PC-9 (cell line): ENCODE measurements at regions of chr11 and their contacts with region 1.

Region 1: DNA sequence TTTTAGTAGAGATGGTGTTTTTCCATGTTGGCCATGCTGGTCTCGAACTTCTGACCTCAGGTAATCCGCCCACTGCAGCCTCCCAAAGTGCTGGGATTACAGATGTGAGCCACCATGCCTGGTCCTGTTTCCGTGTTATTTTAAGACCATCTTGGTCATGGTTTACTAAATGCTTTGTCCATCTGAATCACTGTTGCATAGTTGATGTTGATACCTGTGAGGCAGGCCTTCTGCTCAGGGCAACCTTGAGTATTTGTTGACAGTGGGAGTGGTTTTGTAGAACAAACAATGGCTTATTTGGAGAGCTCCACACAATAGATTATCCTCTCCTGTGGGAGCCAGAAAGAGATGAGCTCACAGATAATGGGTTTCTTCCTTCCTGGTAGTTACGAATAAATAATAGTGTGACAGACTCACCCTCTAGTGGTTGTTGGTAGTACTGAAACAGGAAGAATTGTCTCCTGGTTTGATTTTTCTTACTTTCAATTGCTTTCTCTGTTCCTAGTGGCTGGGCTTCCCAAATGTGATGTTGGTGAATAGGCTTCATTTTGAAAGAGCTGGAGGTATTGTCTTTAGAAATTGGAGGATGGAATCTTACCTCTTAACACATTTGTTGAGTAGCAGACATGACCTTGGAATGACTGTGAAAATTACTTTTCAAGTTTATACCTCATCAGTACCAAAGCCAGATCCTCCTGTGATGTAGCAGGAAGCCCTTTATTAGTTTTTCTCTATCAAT is 39.0 kb downstream of the CTNND1 start:
- DNase-seq: peak; percentile 71 to 100
- H3K4me3 ChIP-seq: peak overlapping the region; percentile 3; the same call in 1 of the 2 replicates
- H3K27ac ChIP-seq: peak overlapping the region; percentile 94
- H3K4me1 ChIP-seq: peaks cover 35% of the 10 kb centered on the region
- H3K27me3 ChIP-seq: no peaks in the 10 kb centered on the region
- CTCF ChIP-seq: peak; percentile 98

Region 2: GRCh38 chr11:57530596-57531507 is 269.8 kb before region 1 on chr11 and contains the start of gene TIMM10:
- CTCF ChIA-PET with region 1: no interaction called
- POLR2A ChIA-PET with region 1: no interaction called
- intact Hi-C with region 1: loop called (anchors 10 kb)
- DNase-seq: peak; percentile 98 to 99
- H3K4me3 ChIP-seq: peak within 1 kb of the TSS; percentile 83
- H3K27ac ChIP-seq: peak within 1 kb of the TSS; percentile 48
- H3K4me1 ChIP-seq: peaks cover 27% of the 10 kb centered on the region
- H3K27me3 ChIP-seq: peaks cover 4% of the 10 kb centered on the region; the same call in 1 of the 2 replicates
- CTCF ChIP-seq: peak; percentile 23; the same call in 1 of the 2 replicates
- total RNA-seq, gene TIMM10: 90.2 and 94.7 TPM in 2 replicates

Region 3: GRCh38 chr11:57735619-57736298 is 64.9 kb before region 1 on chr11:
- CTCF ChIA-PET with region 1: interaction called, 6 read pairs
- POLR2A ChIA-PET with region 1: interaction called, 3 read pairs
- intact Hi-C with region 1: loop called (anchors 1 kb)
- DNase-seq: peak; percentile 51 to 68
- H3K4me3 ChIP-seq: no peak overlapping the region
- H3K27ac ChIP-seq: peak overlapping the region; percentile 55
- H3K4me1 ChIP-seq: peaks cover 35% of the 10 kb centered on the region
- H3K27me3 ChIP-seq: no peaks in the 10 kb centered on the region
- CTCF ChIP-seq: no peak

Region 4: GRCh38 chr11:57751676-57752253 is 48.8 kb before region 1 on chr11 and contains the start of gene BTBD18:
- CTCF ChIA-PET with region 1: interaction called, 17 read pairs
- POLR2A ChIA-PET with region 1: interaction called, 4 read pairs
- intact Hi-C with region 1: no loop called
- DNase-seq: peak; percentile 18 to 50
- H3K4me3 ChIP-seq: no peak within 1 kb of the TSS
- H3K27ac ChIP-seq: no peak within 1 kb of the TSS
- H3K4me1 ChIP-seq: no peaks in the 10 kb centered on the region; the same call in 1 of the 2 replicates
- H3K27me3 ChIP-seq: no peaks in the 10 kb centered on the region
- CTCF ChIP-seq: peak; percentile 63
- total RNA-seq, gene BTBD18: not detected in 2 replicates

Region 5: DNA sequence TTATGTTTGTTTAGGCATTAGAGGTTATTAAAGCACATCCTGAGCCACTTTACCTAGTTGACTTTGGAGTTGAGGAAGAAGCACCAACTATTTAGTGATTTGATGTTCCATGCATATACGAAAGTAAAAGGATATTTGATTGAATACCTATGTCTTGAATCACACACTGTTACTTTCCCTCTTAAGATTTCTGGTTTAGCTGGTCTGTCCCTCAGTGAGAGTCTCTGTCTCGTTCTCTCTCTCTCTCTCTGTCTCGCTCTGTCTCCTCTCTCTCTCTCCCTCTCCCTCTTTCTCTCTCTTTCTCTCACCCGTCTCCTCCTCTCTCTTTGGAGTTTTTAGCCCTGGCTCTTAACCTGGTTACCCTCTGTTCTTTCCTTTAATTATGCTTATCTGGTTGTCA is 28.1 kb before region 1 on chr11:
- CTCF ChIA-PET with region 1: no interaction called
- POLR2A ChIA-PET with region 1: interaction called, 14 read pairs
- intact Hi-C with region 1: no loop called
- DNase-seq: peak in 1 of 2 experiments; percentile 92
- H3K4me3 ChIP-seq: peak overlapping the region; percentile 40; the same call in 1 of the 2 replicates
- H3K27ac ChIP-seq: peak overlapping the region; percentile 86
- H3K4me1 ChIP-seq: peaks cover 89% of the 10 kb centered on the region
- H3K27me3 ChIP-seq: no peaks in the 10 kb centered on the region
- CTCF ChIP-seq: no peak

Region 6: GRCh38 chr11:58513747-58514367 is 713.2 kb after region 1 on chr11:
- CTCF ChIA-PET with region 1: no interaction called
- POLR2A ChIA-PET with region 1: no interaction called
- intact Hi-C with region 1: loop called (anchors 5 kb)
- DNase-seq: peak; percentile 65 to 67
- H3K4me3 ChIP-seq: no peak overlapping the region
- H3K27ac ChIP-seq: no peak overlapping the region
- H3K4me1 ChIP-seq: no peaks in the 10 kb centered on the region
- H3K27me3 ChIP-seq: 0 out of 2 replicates have a peak, but pooled peaks cover 3% of the 10 kb centered on the region
- CTCF ChIP-seq: peak; percentile 87